IMR-90 (cell line): ENCODE measurements at regions of chr1 and their contacts with region 1.

Region 1: DNA sequence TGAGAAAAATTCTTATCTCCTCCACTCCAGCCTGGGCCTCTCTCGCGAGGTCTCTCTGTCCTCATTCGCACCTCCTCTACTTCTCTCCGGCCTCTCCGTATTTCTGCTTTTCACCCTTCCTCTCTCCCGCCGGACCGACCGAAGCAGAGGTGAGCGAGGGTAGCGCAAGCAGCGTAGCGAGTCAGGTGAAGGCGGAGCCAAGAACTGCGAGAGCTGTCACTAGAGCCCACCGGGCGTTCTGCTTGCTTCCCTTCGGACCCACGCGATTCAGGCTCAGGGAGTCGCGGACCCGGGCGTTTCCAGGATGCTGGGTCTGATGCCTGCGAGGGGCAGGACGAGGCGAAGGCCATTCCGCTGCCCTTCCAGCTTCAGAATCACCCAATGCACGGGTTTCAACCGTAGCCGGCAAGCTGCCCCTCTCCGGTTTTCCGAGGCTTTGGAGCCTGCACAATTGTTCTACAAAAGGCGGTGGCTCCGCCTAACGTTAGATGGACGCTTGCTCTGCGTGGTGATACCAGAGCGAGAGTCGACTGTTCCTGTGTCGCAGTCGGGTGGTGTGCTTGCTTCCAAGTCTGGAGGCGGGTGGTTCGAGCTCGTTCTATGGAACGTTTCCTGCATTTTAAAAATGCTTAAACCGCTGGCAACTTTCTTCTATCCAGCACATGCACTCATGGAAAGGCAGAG is 310.2 kb downstream of the FAM72C start:
- DNase-seq: no peak
- ATAC-seq: no peak
- H3K4me3 ChIP-seq: no peak overlapping the region
- H3K27ac ChIP-seq: no peak overlapping the region
- H3K4me1 ChIP-seq: no peaks in the 10 kb centered on the region
- H3K27me3 ChIP-seq: peaks cover 16% of the 10 kb centered on the region; the same call in 1 of the 2 replicates
- CTCF ChIP-seq: no peak
- POLR2A ChIP-seq: no peak
- RAD21 ChIP-seq: no peak

Region 2: DNA sequence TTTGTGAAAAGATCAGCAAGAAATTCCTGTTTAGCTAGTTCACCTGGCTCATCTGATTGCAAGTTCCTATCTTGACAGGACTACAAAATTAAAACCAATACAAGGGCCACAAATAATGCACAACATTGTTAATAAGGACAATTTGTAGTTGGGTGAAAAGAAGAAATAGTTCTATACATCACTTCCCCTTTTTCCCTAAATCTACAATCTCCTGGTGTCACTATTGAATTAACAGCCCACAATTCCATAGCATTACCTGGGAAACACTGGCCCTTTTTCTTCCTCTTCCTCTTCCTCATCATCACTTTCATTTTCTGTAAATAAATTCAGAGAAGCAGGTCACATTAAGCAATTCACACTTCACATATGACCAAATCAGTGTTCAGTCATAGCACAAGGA is 56.7 kb before region 1 on chr1:
- CTCF ChIA-PET with region 1: no interaction called
- POLR2A ChIA-PET with region 1: no interaction called
- dilution Hi-C with region 1: no loop called
- in situ Hi-C with region 1: loop called (anchors 5 kb)
- intact Hi-C with region 1: no loop called
- DNase-seq: no peak
- ATAC-seq: no peak
- H3K4me3 ChIP-seq: no peak overlapping the region
- H3K27ac ChIP-seq: no peak overlapping the region
- H3K4me1 ChIP-seq: no peaks in the 10 kb centered on the region
- H3K27me3 ChIP-seq: no peaks in the 10 kb centered on the region
- CTCF ChIP-seq: no peak
- POLR2A ChIP-seq: no peak
- RAD21 ChIP-seq: no peak

Region 3: DNA sequence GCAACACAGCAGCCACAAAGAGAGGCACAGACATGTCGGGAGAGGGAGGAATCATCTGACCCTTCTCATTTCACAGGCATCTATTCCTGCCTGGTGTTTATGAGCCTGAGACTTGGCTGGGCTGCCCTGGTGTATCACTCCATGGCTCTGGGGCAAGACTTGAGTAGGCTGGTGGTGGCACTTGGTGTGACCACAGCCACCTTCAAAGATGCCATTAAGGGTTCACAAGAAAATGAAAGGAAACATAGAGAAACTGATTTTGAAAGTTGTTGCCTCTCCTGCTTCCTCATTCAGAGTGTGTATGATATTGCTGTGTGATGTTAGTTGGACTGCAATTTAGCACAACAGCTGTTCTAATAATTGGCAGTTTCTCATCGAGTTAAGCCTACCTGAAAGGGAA is 11.4 kb after region 1 on chr1:
- CTCF ChIA-PET with region 1: no interaction called
- POLR2A ChIA-PET with region 1: no interaction called
- dilution Hi-C with region 1: no loop called
- in situ Hi-C with region 1: no loop called
- intact Hi-C with region 1: no loop called
- DNase-seq: no peak
- ATAC-seq: no peak
- H3K4me3 ChIP-seq: no peak overlapping the region
- H3K27ac ChIP-seq: no peak overlapping the region
- H3K4me1 ChIP-seq: no peaks in the 10 kb centered on the region
- H3K27me3 ChIP-seq: peaks cover 2% of the 10 kb centered on the region
- CTCF ChIP-seq: no peak
- POLR2A ChIP-seq: no peak
- RAD21 ChIP-seq: no peak

Region 4: DNA sequence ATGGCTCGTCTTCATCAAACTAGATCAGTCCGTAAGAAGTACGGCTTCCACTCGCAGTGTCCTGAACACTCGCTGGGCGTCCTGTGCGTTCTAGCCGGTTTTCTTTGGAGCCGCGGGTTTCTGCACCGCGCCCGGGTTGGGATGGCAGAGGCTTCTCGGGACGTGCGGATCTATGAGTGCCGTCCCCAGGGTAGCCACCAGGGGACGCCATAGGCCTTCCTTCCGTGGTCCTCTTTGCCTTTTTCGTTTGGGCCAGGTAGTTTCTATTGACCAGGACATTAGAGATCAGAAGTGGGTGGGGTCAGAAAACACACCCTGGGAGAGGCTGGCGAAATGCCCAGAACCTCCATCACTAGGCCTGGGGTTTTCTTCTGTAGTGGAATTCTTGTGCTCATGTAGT is 36.5 kb after region 1 on chr1:
- CTCF ChIA-PET with region 1: no interaction called
- POLR2A ChIA-PET with region 1: no interaction called
- dilution Hi-C with region 1: no loop called
- in situ Hi-C with region 1: no loop called
- intact Hi-C with region 1: no loop called
- DNase-seq: no peak
- ATAC-seq: no peak
- H3K4me3 ChIP-seq: no peak overlapping the region
- H3K27ac ChIP-seq: no peak overlapping the region
- H3K4me1 ChIP-seq: no peaks in the 10 kb centered on the region
- H3K27me3 ChIP-seq: peaks cover 17% of the 10 kb centered on the region
- CTCF ChIP-seq: peak; percentile 39
- POLR2A ChIP-seq: no peak
- RAD21 ChIP-seq: peak; percentile 41

Region 5: GRCh38 chr1:143720087-143721023 is 58.8 kb after region 1 on chr1:
- CTCF ChIA-PET with region 1: no interaction called
- POLR2A ChIA-PET with region 1: no interaction called
- dilution Hi-C with region 1: no loop called
- in situ Hi-C with region 1: no loop called
- intact Hi-C with region 1: no loop called
- DNase-seq: peak; percentile 11
- ATAC-seq: no peak
- H3K4me3 ChIP-seq: no peak overlapping the region
- H3K27ac ChIP-seq: no peak overlapping the region
- H3K4me1 ChIP-seq: no peaks in the 10 kb centered on the region
- H3K27me3 ChIP-seq: peaks cover 9% of the 10 kb centered on the region
- CTCF ChIP-seq: no peak
- POLR2A ChIP-seq: no peak
- RAD21 ChIP-seq: no peak